ENCODE measurements at regions of chr2 and their contacts with region 1.

Region 1: GRCh38 chr2:23824777-23825212 is 102.1 kb downstream of the ATAD2B start:
- DNase-seq: peak; percentile 78
- H3K4me3 ChIP-seq: no peak overlapping the region
- H3K27ac ChIP-seq: no peak overlapping the region
- H3K4me1 ChIP-seq: no peaks in the 10 kb centered on the region
- H3K27me3 ChIP-seq: no peaks in the 10 kb centered on the region
- CTCF ChIP-seq: peak; percentile 51 to 57
- POLR2A ChIP-seq: no peak

Region 2: DNA sequence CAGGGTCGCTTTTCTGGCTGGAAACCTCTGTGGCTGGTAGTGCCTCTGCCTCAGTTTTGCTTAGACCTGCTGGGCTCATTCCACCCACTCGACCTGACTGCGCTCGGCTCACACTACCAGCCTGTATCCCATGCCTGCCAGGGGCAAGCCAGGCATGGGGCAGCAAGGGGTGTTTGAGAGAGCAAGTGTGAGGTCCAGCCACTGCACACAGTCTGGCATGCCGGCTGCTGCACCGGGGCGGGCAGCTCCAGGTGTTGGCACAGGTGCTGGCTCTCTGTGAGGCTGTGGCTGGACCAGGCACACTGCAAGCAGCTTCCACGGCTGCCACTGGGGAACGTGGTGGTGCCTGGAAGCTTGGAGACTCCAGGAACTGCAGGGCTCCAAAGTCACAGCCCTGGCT is 11.2 kb after region 1 on chr2:
- CTCF ChIA-PET with region 1: interaction called, 29 read pairs
- POLR2A ChIA-PET with region 1: no interaction called
- dilution Hi-C with region 1: no loop called
- intact Hi-C with region 1: no loop called
- DNase-seq: no peak
- H3K4me3 ChIP-seq: no peak overlapping the region
- H3K27ac ChIP-seq: no peak overlapping the region
- H3K4me1 ChIP-seq: no peaks in the 10 kb centered on the region
- H3K27me3 ChIP-seq: no peaks in the 10 kb centered on the region
- CTCF ChIP-seq: no peak
- POLR2A ChIP-seq: no peak

Region 3: DNA sequence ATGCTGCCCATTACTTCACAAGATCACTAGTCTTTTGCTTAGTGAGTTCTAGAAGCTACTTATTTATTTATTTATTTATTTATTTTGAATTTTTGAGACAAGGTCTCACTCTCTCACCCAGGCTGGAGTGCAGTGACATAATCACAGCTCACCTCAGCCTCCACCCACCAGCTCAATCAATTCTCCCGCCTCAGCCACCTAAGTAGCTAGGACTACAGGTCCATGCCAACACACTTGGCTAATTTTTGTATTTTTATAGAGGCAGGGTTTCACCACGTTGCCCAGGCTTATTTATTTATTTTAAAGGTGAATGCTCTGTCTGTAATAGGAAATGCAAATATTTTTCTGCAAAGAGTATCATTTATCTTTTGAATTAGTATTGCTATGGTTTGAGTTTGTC is 34.4 kb after region 1 on chr2:
- CTCF ChIA-PET with region 1: interaction called, 10 read pairs
- POLR2A ChIA-PET with region 1: no interaction called
- dilution Hi-C with region 1: no loop called
- intact Hi-C with region 1: no loop called
- DNase-seq: no peak
- H3K4me3 ChIP-seq: no peak overlapping the region
- H3K27ac ChIP-seq: no peak overlapping the region
- H3K4me1 ChIP-seq: no peaks in the 10 kb centered on the region
- H3K27me3 ChIP-seq: no peaks in the 10 kb centered on the region
- CTCF ChIP-seq: no peak
- POLR2A ChIP-seq: no peak

Region 4: DNA sequence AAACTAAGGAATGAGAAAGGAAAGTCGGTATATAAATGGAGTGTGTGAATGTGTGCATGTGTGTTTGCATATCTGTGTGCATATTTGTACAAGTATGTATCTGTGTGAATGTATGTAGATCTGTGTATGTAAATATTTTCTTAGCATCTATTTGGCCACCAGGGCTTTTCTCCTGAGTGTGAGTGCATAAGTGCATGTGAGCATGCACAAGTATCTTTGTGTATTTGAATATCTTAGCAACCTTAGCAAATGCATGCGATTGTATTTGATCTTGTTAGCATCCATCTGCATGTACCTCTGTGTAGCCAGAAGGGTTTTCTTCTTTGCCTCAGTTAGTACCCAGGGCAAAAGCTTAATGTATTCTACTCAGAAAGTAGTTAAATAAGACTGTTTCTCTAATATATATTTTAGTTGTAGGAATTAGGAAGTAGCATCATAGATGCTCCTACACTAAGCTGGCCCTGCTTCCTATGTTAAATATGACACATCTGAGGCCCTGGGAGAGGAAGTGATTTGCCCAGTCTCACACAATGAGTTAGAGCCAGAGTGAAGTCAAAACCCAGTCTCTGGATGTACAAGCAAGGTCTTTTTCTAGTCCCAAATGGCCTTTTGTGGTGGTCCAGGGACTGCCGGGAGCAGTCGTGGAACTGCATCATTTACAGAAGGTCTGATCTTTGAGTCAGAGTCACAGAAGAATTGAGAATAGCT is 233.9 kb after region 1 on chr2:
- CTCF ChIA-PET with region 1: interaction called, 54 read pairs
- POLR2A ChIA-PET with region 1: no interaction called
- dilution Hi-C with region 1: no loop called
- intact Hi-C with region 1: loop called (anchors 2 kb)
- DNase-seq: no peak
- H3K4me3 ChIP-seq: no peak overlapping the region
- H3K27ac ChIP-seq: no peak overlapping the region
- H3K4me1 ChIP-seq: no peaks in the 10 kb centered on the region
- H3K27me3 ChIP-seq: no peaks in the 10 kb centered on the region
- CTCF ChIP-seq: no peak
- POLR2A ChIP-seq: no peak